ENCODE measurements at regions of chr10 and their contacts with region 1.

Region 1: DNA sequence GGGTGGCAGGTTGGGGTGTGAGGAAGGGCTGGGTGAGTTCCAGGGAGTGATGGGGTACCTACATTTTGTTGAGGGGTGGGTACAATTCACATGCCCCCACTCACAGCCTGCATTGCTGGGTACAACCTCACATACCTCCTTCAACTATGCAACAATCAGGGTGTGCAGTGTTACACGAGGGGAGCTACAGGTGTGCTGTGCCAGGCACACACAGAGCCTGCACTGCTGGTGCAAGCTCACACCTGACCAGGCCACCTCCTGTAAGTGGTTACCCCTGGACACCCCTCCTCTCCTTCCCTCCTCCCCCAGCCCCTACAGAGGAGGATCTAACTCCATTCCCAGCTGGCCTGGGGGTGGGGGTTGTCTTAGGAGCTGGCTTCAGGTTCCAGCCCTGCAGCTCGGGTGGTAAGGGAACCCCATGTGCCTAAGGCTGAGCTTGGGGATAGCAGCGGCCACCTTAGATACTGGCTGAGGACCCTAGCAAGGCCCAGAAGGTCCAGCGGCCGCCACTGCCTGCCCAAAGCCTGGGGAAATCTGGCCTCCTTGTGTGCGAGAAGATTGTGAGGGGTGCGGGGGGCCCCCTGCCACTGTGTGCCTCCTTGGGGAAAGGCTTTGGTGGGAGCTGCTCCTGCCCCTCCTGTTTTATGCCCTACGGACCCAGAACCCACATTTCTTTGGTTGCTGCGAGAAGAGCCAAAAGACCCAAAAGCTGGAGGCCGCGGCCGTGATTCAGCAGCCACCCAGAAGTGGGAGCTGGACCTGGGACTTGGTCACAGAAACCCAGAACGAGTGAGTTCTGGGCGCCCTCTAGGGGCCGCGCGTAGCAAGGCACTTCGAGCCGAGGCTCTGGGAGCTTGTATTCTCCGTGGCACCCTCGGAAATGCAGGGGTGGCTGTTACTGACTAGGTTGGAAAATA is 10.8 kb downstream of the TLX1 start:
- DNase-seq: peak; percentile 39 to 90
- H3K4me3 ChIP-seq: no peak overlapping the region
- H3K27ac ChIP-seq: no peak overlapping the region
- H3K4me1 ChIP-seq: peaks cover 0 to 9% of the 10 kb centered on the region in 2 donors
- H3K27me3 ChIP-seq: peaks cover 30% of the 10 kb centered on the region
- CTCF ChIP-seq: peak; percentile 83 to 95 (median 95)

Region 2: DNA sequence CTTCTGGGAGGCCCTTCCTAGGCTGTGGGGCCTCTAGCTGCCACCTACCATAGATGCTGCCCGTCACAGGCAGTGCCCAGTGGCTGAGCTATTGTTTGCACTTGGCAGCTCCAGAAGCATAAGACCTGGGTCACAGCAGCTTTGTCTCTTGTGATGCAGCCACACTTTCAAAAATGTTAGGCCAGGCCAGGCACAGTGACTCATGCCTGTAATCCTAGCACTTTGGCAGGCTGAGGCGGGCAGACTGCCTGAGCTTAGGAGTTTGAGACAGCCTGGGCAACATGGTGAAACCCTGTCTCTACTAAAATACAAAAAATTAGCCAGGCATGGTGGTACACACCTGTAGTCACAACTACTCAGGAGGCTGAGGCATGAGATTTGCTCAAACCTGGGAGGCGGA is 89.6 kb before region 1 on chr10:
- intact Hi-C with region 1: loop called (anchors 5 kb)
- DNase-seq: peak; percentile 52 to 81
- H3K4me3 ChIP-seq: no peak overlapping the region
- H3K27ac ChIP-seq: peak overlapping the region in 1 of 2 donors; percentile 68
- H3K4me1 ChIP-seq: peaks cover 8 to 11% of the 10 kb centered on the region in 2 donors
- H3K27me3 ChIP-seq: peaks cover 25% of the 10 kb centered on the region
- CTCF ChIP-seq: peak in 1 of 3 experiments; percentile 11

Region 3: DNA sequence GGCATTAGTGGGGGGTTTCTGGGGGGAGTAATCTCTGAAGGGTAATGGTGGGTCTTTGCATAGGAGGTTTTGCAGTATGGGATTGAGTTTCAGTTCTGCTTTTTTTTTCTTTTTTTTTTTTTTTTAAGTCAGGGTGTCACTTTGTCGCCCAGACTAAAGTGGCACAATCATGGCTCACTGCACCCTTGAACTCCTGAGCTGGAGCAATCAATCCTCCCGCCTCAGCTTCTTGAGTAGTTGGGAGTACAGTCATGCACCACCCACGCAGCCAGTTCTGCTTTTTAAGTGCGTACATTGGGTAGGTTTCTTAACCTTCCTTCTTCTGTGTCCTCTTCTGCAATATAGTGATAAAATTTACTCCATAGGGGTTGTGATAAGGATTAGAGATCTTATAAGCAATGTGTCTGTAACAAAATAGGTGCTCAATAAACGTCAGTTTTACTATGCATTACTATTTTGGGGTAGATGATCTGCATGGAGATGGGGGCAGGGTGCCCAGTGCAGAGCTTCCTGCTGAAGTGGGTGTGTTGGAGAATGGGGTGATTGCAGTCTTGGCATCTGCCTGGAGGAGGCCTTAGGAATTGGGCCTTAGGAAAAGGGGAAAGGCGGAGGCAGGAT is 70.5 kb before region 1 on chr10:
- intact Hi-C with region 1: no loop called
- DNase-seq: peak in 1 of 2 donors; percentile 72
- H3K4me3 ChIP-seq: no peak overlapping the region
- H3K27ac ChIP-seq: no peak overlapping the region
- H3K4me1 ChIP-seq: peaks cover 6 to 14% of the 10 kb centered on the region in 2 donors
- H3K27me3 ChIP-seq: no peaks in the 10 kb centered on the region
- CTCF ChIP-seq: no peak

Region 4: GRCh38 chr10:101095542-101096213 is 46.2 kb before region 1 on chr10:
- intact Hi-C with region 1: loop called (anchors 1 kb)
- DNase-seq: peak in 1 of 2 donors; percentile 76
- H3K4me3 ChIP-seq: no peak overlapping the region
- H3K27ac ChIP-seq: no peak overlapping the region
- H3K4me1 ChIP-seq: no peaks in the 10 kb centered on the region
- H3K27me3 ChIP-seq: peaks cover 3% of the 10 kb centered on the region
- CTCF ChIP-seq: peak; percentile 47 to 79 (median 52)

Region 5: GRCh38 chr10:101120884-101121653 is 20.8 kb before region 1 on chr10:
- intact Hi-C with region 1: no loop called
- DNase-seq: no peak
- H3K4me3 ChIP-seq: peak overlapping the region; percentile 64 to 70
- H3K27ac ChIP-seq: no peak overlapping the region
- H3K4me1 ChIP-seq: peaks cover 0 to 11% of the 10 kb centered on the region in 2 donors
- H3K27me3 ChIP-seq: peaks cover 8% of the 10 kb centered on the region
- CTCF ChIP-seq: no peak

Measured in ascending aorta (tissue), 2 donors.